HEK293 (cell line): ENCODE measurements at regions of chr17 and their contacts with region 1.

Region 1: GRCh38 chr17:19766422-19767270 is 18.5 kb upstream of the ALDH3A1 start:
- H3K4me3 ChIP-seq: no peak overlapping the region
- H3K27ac ChIP-seq: no peak overlapping the region
- H3K4me1 ChIP-seq: no peaks in the 10 kb centered on the region
- CTCF ChIP-seq: peak; percentile 92

Region 2: DNA sequence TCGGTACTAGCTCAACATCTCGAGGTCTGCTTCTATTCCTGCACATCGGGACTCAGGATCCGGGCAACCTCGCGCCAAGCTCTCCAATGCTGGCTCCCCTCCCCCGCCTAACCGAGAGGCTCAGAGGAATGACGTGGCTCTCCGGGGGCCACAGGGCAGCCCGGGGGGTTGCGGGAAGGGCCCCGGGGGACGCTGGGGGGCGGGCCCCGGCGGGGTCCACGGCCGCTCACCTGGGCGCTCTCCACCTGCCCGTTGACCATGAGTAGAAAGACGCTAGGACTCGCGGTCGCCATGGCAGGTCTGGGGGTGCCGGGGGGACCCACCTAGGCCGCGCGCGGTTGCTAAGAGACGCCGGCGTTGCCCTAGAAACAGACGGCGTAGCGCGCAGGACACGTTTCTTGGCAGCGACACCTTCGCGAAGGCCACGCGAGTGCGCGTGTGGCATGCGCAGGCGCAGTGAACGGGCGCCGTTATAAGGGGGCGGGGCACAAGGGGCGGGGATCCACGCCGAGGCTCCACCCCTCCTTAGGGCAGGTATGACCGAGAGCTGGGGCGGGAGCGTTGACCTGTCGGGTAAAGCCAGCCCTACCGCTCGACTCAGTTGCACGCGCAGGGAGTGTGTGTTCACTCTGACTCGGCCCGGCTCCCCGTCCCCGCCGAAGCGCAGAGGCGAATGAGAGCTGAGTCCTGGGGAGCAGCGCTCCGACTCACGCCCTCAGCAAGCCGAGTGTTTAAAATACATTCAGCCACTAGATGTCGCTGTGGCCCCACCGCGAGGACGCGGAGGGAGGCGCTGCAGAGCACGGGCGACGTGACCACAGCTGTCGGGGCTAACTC is 404.2 kb before region 1 on chr17 and contains the start of gene B9D1:
- CTCF ChIA-PET with region 1: interaction called, 102 read pairs
- POLR2A ChIA-PET with region 1: interaction called, 9 read pairs
- H3K4me3 ChIP-seq: peak within 1 kb of the TSS; percentile 81
- H3K27ac ChIP-seq: peak within 1 kb of the TSS; percentile 47
- H3K4me1 ChIP-seq: peaks cover 5% of the 10 kb centered on the region
- CTCF ChIP-seq: peak; percentile 100

Region 3: DNA sequence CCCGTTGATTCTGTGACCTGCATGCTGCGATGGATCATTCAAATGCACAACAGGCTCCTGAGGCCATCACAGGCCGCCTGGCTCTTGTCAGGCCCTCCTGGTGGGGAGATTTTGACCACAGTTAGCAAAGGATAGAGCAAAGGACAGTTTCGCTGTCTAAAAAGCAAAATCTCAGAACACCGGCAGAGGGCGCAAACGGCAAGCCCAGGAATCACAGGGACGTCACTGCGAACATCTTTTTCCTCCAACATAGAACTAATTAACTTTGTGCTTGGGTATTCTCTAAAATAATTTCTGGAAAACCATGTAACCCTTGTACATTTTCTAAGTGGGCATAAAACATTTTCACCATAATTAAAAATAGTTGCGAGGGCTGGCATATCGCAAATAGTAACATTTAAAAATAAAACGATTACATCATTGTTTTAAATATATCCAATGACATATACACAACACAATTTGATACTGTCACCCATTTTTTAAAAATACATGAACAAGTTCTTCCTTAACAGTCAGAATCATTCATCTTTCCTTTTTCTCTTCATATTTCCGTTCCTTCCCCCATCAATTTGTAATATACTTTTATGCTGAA is 252.7 kb before region 1 on chr17:
- CTCF ChIA-PET with region 1: interaction called, 173 read pairs
- POLR2A ChIA-PET with region 1: interaction called, 3 read pairs
- H3K4me3 ChIP-seq: no peak overlapping the region
- H3K27ac ChIP-seq: no peak overlapping the region
- H3K4me1 ChIP-seq: no peaks in the 10 kb centered on the region
- CTCF ChIP-seq: peak; percentile 82

Region 4: GRCh38 chr17:19641687-19642372 is 124.8 kb before region 1 on chr17:
- CTCF ChIA-PET with region 1: interaction called, 35 read pairs
- POLR2A ChIA-PET with region 1: no interaction called
- H3K4me3 ChIP-seq: no peak overlapping the region
- H3K27ac ChIP-seq: no peak overlapping the region
- H3K4me1 ChIP-seq: peaks cover 21% of the 10 kb centered on the region
- CTCF ChIP-seq: no peak

Region 5: GRCh38 chr17:19753049-19753444 is 13.6 kb before region 1 on chr17:
- CTCF ChIA-PET with region 1: interaction called, 33 read pairs
- POLR2A ChIA-PET with region 1: no interaction called
- H3K4me3 ChIP-seq: no peak overlapping the region
- H3K27ac ChIP-seq: no peak overlapping the region
- H3K4me1 ChIP-seq: no peaks in the 10 kb centered on the region
- CTCF ChIP-seq: no peak

Region 6: GRCh38 chr17:19830061-19830460 is 63.4 kb after region 1 on chr17:
- CTCF ChIA-PET with region 1: no interaction called
- POLR2A ChIA-PET with region 1: no interaction called
- H3K4me3 ChIP-seq: no peak overlapping the region
- H3K27ac ChIP-seq: no peak overlapping the region
- H3K4me1 ChIP-seq: no peaks in the 10 kb centered on the region
- CTCF ChIP-seq: no peak

Region 7: DNA sequence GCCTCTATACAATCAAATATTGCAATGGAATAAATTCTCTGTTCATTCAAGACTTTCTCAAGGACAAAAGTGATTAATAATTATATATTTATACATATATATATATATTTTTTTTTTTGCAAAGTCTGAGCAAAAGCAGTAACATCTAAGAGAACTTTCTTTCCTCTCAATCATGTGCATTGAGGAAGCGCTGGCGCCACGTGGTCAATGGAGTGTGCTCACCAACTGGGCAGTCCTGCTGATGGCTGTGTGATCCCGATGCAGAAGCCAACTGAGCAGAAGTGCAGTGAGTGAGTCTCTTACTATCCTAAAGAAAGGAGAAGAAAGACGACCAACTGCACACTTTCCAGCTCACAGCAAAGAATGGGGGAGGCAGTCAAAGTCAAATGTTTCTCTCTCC is 138.3 kb after region 1 on chr17:
- CTCF ChIA-PET with region 1: no interaction called
- POLR2A ChIA-PET with region 1: no interaction called
- H3K4me3 ChIP-seq: no peak overlapping the region
- H3K27ac ChIP-seq: no peak overlapping the region
- H3K4me1 ChIP-seq: no peaks in the 10 kb centered on the region
- CTCF ChIP-seq: no peak